ENCODE measurements at regions of chr3 and their contacts with region 1.

Region 1: DNA sequence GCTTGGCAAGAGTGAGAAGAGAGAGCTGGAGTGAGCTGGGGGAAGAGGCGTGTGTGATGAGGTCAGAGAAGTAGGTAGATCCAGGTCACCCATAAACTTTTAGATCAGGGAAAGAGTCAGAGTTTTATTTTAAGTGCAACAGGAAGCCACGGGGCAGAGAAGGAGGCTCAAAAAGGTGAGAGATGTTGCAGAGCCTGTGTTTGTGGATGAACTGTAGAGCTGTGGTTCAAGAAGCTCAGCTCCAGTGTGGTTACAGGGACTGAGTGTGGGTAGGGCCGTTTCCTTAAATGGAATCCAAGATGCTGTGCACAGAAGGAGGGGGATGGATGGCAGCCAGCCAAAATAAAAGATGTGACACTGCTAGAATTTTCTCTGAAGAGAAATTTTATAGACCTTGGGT is 337.2 kb downstream of the SATB1 start:
- DNase-seq: no peak

Region 2: DNA sequence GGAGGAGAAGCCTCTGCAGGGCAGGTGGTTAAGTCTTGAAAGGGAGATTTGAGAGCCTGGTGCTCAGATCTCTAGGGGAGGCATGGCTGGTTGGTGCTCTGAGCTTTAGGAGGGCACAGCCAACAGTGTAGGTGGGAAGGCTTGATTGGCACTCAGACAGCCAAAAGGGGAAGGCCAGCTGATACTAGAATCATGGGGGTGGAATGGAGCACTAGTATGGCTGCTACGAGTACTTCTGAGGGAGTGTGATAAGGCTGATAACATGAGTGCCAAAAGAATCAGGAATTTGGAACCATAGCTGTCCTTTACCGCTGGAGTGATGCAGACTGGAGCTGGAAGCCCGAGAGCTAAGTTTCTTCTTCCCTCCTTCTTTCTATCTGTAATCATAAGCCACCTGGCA is 161.0 kb before region 1 on chr3:
- intact Hi-C with region 1: loop called in 1 of 2 experiments (anchors 2 kb)
- DNase-seq: no peak